Activated naive CD4-positive, alpha-beta T cell treated with anti-CD3 and anti-CD28 coated beads for 36 hours (primary cell): ENCODE measurements at regions of chr12 and their contacts with region 1.

Region 1: GRCh38 chr12:64687816-64688215 is 71.4 kb downstream of the GNS start:
- DNase-seq: no peak
- H3K4me3 Mint-ChIP-seq: peak overlapping the region; percentile 40
- H3K27ac Mint-ChIP-seq: peak overlapping the region; percentile 78
- H3K4me1 Mint-ChIP-seq: peaks cover 74% of the 10 kb centered on the region
- H3K27me3 Mint-ChIP-seq: no peaks in the 10 kb centered on the region

Region 2: DNA sequence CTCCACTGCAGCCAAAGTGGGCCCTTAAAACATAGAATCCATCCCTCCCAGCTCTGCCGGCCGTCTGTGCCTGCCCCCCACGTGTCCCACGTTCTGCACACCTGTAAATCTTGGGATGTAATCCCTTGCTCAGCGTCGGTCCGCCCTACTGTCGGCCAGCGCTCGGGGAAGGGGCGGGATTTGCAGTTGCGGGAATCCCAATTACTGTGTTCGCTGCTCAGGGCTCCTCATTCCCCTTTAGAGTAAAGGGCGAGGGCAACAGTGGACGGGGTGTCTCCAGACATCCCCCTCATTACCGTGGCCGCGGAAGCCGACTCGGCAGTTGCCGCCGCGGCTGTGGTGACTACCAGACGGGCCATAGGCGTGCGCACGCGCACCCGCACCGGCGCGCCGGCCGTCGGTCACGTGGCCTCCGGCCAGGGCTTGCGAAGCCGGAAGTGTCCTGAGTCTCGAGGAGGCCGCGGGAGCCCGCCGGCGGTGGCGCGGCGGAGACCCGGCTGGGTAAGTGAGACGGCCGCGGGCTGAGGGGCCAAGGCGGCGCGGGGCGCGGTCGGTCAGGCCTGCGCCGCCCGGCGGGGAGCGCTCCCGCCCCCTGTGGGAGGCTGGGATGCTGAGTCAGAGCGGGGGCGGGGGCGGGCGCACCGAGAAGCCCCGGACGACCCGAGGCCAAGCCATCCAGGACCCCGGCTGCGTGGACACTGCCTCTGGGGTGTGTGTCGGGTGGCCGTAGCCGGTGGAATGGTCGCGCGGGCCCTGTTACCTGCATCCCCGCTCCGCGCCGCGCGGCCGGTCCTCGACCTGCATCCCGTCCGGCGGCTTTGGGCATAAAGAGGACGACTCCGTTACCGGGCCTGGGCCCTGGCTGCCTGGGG is 235.9 kb before region 1 on chr12 and contains the start of gene TBK1:
- CTCF ChIA-PET with region 1: no interaction called
- intact Hi-C with region 1: loop called (anchors 1 kb)
- DNase-seq: peak; percentile 45
- H3K4me3 Mint-ChIP-seq: peak within 1 kb of the TSS; percentile 94
- H3K27ac Mint-ChIP-seq: peak within 1 kb of the TSS; percentile 94
- H3K4me1 Mint-ChIP-seq: peaks cover 41% of the 10 kb centered on the region
- H3K27me3 Mint-ChIP-seq: no peaks in the 10 kb centered on the region
- total RNA-seq, gene TBK1: 10.7 to 12.1 TPM

Region 3: DNA sequence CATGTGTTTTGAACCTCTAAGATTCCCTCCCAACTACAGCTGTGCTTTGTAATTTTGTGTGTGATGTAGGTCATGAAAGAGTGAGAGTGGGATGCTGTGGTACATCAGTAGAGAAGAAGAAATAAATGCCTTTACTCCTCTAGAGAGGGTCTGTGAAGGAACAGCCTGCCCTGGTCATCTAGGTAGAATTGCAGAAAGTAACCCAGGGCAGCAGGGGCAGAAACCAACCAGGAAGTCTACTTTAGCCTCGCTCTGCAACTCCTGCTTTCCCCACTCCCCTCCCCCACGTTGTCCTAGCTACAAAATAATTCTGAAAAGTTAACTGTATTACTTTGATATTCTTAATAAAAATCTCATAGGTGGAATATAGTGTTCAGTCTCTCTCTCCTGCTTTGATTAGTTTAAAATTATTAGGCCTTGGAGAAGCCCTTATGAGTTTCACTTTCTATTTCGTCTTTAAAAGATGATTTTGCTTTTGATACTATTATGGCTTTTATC is 228.4 kb before region 1 on chr12:
- CTCF ChIA-PET with region 1: no interaction called
- intact Hi-C with region 1: loop called (anchors 1 kb)
- DNase-seq: peak; percentile 14
- H3K4me3 Mint-ChIP-seq: peak overlapping the region; percentile 72
- H3K27ac Mint-ChIP-seq: peak overlapping the region; percentile 85
- H3K4me1 Mint-ChIP-seq: peaks cover 38% of the 10 kb centered on the region
- H3K27me3 Mint-ChIP-seq: no peaks in the 10 kb centered on the region